ENCODE measurements at regions of chr16 and their contacts with region 1.

Region 1: GRCh38 chr16:86563489-86564345 is 2.9 kb upstream of the FOXC2 start:
- DNase-seq: peak; percentile 78 to 93 (median 88)
- ATAC-seq: peak; percentile 96 to 99 (median 98)
- H3K4me3 ChIP-seq: peak overlapping the region in 2 of 4 donors; percentile 13 to 23
- H3K27ac ChIP-seq: no peak overlapping the region
- H3K4me1 ChIP-seq: peaks cover 0 to 6% (median 0%) of the 10 kb centered on the region in 3 donors
- H3K27me3 ChIP-seq: peaks cover 0 to 41% (median 18%) of the 10 kb centered on the region in 4 donors
- CTCF ChIP-seq: peak; percentile 99 to 100 (median 100)

Region 2: GRCh38 chr16:87278191-87279095 is 714.7 kb after region 1 on chr16:
- intact Hi-C with region 1: loop called (anchors 5 to 10 kb)
- DNase-seq: peak; percentile 59 to 93 (median 82)
- ATAC-seq: peak; percentile 98 to 100 (median 99)
- H3K4me3 ChIP-seq: no peak overlapping the region
- H3K27ac ChIP-seq: no peak overlapping the region
- H3K4me1 ChIP-seq: no peaks in the 10 kb centered on the region
- H3K27me3 ChIP-seq: no peaks in the 10 kb centered on the region
- CTCF ChIP-seq: peak; percentile 74 to 85 (median 79)

Region 3: GRCh38 chr16:87288753-87289362 is 725.1 kb after region 1 on chr16:
- intact Hi-C with region 1: loop called in 2 of 3 experiments (anchors 5 to 10 kb)
- DNase-seq: no peak
- ATAC-seq: no peak
- H3K4me3 ChIP-seq: no peak overlapping the region
- H3K27ac ChIP-seq: no peak overlapping the region
- H3K4me1 ChIP-seq: no peaks in the 10 kb centered on the region
- H3K27me3 ChIP-seq: no peaks in the 10 kb centered on the region
- CTCF ChIP-seq: no peak

Region 4: DNA sequence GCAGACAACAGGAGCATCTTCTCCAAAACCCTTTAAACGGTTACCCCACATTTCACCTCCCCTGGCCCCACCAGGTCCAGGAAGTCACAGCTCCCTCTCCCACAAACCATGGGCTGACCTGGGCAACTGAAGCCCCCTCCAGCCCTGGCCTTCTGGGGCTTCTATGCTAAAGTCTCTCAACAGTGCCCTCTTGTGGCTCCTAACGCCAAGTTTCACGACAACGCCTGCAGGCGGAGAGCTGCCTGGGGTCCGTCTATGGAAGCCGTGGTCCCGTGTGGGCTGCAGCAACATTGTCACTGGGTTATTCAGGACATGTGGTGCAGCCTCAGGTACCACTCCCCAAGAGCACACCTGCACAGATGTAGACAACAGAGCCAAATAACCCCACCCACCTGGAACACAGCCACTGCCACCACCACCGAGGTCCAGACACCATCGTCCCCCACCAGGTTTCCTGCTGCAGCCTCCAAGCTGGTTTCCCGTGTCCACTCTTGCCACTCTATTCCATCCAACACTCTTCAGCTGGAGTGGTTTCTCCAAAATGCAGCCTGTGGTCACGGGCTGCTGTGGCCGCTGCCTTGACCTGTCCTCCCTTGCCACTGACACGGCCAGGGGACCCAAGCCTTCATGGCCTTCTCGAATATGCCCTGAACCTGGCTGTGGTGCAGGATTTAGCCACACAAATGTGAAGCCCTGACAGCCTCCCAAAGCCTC is 734.4 kb after region 1 on chr16:
- intact Hi-C with region 1: loop called in 1 of 3 experiments (anchors 5 kb)
- DNase-seq: peak in 1 of 6 donors; percentile 38
- ATAC-seq: peak in 2 of 4 donors; percentile 55 to 56
- H3K4me3 ChIP-seq: no peak overlapping the region
- H3K27ac ChIP-seq: no peak overlapping the region
- H3K4me1 ChIP-seq: no peaks in the 10 kb centered on the region
- H3K27me3 ChIP-seq: no peaks in the 10 kb centered on the region
- CTCF ChIP-seq: peak; percentile 11 to 51 (median 39)

Measured in pancreas (tissue), 10 donors.